K562 (cell line): ENCODE measurements at regions of chr3 and their contacts with region 1.

Region 1: DNA sequence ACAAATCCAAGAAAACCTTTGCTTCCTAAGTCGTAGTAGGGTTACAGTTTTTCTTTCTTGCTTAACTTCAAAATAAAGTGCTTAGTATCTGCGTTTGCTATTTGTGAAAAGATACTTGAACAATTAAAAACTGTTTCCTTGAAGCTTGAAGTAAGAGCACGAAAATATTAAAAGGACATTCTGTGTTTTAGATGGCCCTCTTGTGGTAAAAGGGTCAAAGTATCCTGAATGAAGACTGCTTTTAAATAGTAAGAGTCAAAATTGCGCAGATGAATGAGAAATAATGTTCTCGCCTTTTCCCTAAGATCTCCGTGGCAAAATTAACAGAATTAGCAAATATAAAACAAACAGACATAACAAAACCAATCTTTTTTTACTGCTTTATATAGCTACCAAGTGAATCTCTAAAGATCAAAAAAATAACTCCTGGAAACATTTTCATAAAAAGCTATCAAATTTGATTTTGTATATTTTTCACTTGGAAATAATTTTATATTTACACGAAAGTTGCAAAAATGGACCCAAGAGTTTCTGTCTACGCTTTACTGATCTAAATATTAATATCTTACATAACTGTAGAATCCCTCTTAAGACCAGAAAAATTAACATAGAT is 175.4 kb downstream of the MBNL1 start:
- DNase-seq: peak in 2 of 4 experiments; percentile 10 to 48
- ATAC-seq: peak; percentile 77
- H3K4me3 ChIP-seq: no peak overlapping the region
- H3K27ac ChIP-seq: no peak overlapping the region; the same call in 1 of the 3 replicates
- H3K4me1 ChIP-seq: no peaks in the 10 kb centered on the region
- H3K27me3 ChIP-seq: no peaks in the 10 kb centered on the region
- CTCF ChIP-seq: peak; percentile 24 to 65 (median 46); a peak in 5 of 6 replicates
- EP300 ChIP-seq: no peak
- POLR2A ChIP-seq: no peak
- RAD21 ChIP-seq: peak; percentile 76 to 82

Region 2: DNA sequence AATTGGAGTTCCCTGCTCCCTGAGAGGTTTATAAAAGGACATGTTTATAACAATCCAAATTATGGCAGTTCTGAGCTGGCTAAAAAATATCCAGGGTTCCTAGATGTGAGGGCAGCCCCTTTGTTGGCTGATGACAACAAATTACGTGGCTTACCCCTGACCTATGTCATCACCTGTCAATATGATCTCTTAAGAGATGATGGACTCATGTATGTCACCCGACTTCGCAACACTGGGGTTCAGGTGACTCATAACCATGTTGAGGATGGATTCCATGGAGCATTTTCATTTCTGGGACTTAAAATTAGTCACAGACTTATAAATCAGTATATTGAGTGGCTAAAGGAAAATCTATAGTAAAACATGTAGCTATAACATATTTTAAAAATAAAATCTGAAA is 616.3 kb before region 1 on chr3:
- CTCF ChIA-PET with region 1: no interaction called
- POLR2A ChIA-PET with region 1: no interaction called
- in situ Hi-C with region 1: no loop called
- intact Hi-C with region 1: no loop called
- DNase-seq: no peak
- ATAC-seq: no peak
- H3K4me3 ChIP-seq: no peak overlapping the region
- H3K27ac ChIP-seq: no peak overlapping the region
- H3K4me1 ChIP-seq: no peaks in the 10 kb centered on the region
- H3K27me3 ChIP-seq: no peaks in the 10 kb centered on the region
- CTCF ChIP-seq: no peak
- EP300 ChIP-seq: no peak
- POLR2A ChIP-seq: no peak
- RAD21 ChIP-seq: no peak

Region 3: GRCh38 chr3:152071924-152072323 is 372.2 kb before region 1 on chr3:
- CTCF ChIA-PET with region 1: interaction called, 3 read pairs
- POLR2A ChIA-PET with region 1: no interaction called
- in situ Hi-C with region 1: no loop called
- intact Hi-C with region 1: loop called (anchors 1 kb)
- DNase-seq: peak in 2 of 4 experiments; percentile 46 to 50
- ATAC-seq: peak; percentile 97
- H3K4me3 ChIP-seq: no peak overlapping the region
- H3K27ac ChIP-seq: no peak overlapping the region
- H3K4me1 ChIP-seq: no peaks in the 10 kb centered on the region
- H3K27me3 ChIP-seq: no peaks in the 10 kb centered on the region
- CTCF ChIP-seq: peak; percentile 51 to 61 (median 57)
- EP300 ChIP-seq: no peak
- POLR2A ChIP-seq: no peak
- RAD21 ChIP-seq: peak; percentile 26 to 78; a peak in 3 of 4 replicates

Region 4: DNA sequence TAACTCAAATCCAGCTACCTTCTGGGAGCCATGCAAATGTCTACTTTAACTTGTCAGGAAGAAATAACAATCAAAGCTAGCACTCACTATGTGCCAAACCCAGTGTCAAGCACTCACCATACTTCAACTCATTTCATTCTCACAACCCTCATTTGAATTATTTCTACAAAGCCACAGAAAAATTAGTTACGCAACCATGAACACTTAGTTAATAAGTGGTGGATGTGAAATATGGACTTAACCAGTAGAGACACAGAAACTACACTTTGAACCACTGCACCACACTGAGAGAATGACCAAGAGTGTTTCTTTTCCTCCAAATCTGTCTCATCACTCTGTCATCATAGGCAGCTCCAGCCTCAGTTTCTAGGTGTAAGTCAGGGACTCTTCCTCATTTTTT is 266.4 kb before region 1 on chr3:
- CTCF ChIA-PET with region 1: interaction called, 13 read pairs
- POLR2A ChIA-PET with region 1: interaction called, 3 read pairs
- in situ Hi-C with region 1: loop called (anchors 10 kb)
- intact Hi-C with region 1: no loop called
- DNase-seq: no peak
- ATAC-seq: no peak; the same call in 1 of the 3 replicates
- H3K4me3 ChIP-seq: no peak overlapping the region
- H3K27ac ChIP-seq: no peak overlapping the region
- H3K4me1 ChIP-seq: peaks cover 0 to 5% of the 10 kb centered on the region in 2 experiments; a peak in 3 of 5 replicates
- H3K27me3 ChIP-seq: no peaks in the 10 kb centered on the region
- CTCF ChIP-seq: no peak
- EP300 ChIP-seq: no peak
- POLR2A ChIP-seq: no peak
- RAD21 ChIP-seq: no peak

Region 5: GRCh38 chr3:152183473-152183872 is 260.7 kb before region 1 on chr3:
- CTCF ChIA-PET with region 1: interaction called, 13 read pairs
- POLR2A ChIA-PET with region 1: interaction called, 3 read pairs
- in situ Hi-C with region 1: loop called (anchors 10 kb)
- intact Hi-C with region 1: loop called (anchors 1 kb)
- DNase-seq: peak; percentile 51 to 88 (median 63)
- ATAC-seq: peak; percentile 97
- H3K4me3 ChIP-seq: no peak overlapping the region
- H3K27ac ChIP-seq: no peak overlapping the region
- H3K4me1 ChIP-seq: peaks cover 0 to 10% of the 10 kb centered on the region in 2 experiments; a peak in 2 of 5 replicates
- H3K27me3 ChIP-seq: no peaks in the 10 kb centered on the region
- CTCF ChIP-seq: peak; percentile 73 to 84 (median 78)
- EP300 ChIP-seq: no peak
- POLR2A ChIP-seq: no peak
- RAD21 ChIP-seq: peak; percentile 83 to 94

Region 6: GRCh38 chr3:152309535-152310307 is 134.4 kb before region 1 on chr3:
- CTCF ChIA-PET with region 1: no interaction called
- POLR2A ChIA-PET with region 1: no interaction called
- in situ Hi-C with region 1: no loop called
- intact Hi-C with region 1: loop called (anchors 10 kb)
- DNase-seq: no peak
- ATAC-seq: no peak
- H3K4me3 ChIP-seq: no peak overlapping the region
- H3K27ac ChIP-seq: no peak overlapping the region
- H3K4me1 ChIP-seq: peaks cover 0 to 5% of the 10 kb centered on the region in 2 experiments; a peak in 2 of 5 replicates
- H3K27me3 ChIP-seq: no peaks in the 10 kb centered on the region
- CTCF ChIP-seq: no peak
- EP300 ChIP-seq: no peak
- POLR2A ChIP-seq: no peak; the same call in 1 of the 2 replicates
- RAD21 ChIP-seq: no peak

Region 7: DNA sequence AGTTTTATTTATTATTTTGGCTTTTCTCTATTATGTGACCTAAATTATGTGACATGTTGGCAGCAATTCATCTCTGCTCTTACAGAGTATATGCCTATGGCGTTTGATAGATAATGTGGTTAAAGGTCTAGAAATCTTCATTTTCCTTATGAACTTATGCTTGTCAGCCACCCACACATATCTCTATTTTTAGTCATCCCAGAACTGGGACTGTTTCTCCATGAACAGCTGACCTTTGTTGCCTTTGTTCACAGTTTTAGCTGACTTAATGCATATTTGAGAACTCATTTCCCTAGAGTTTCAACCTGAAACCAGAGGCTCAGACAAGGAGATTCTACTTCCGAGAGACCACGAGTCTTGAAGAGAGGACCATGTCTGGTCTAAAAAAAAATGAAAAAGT is 894.4 kb after region 1 on chr3:
- CTCF ChIA-PET with region 1: no interaction called
- POLR2A ChIA-PET with region 1: no interaction called
- in situ Hi-C with region 1: no loop called
- intact Hi-C with region 1: no loop called
- DNase-seq: peak in 2 of 4 experiments; percentile 11 to 43
- ATAC-seq: no peak
- H3K4me3 ChIP-seq: no peak overlapping the region
- H3K27ac ChIP-seq: peak overlapping the region; percentile 30; the same call in 1 of the 3 replicates
- H3K4me1 ChIP-seq: no peaks in the 10 kb centered on the region; a peak in 2 of 5 replicates
- H3K27me3 ChIP-seq: no peaks in the 10 kb centered on the region
- CTCF ChIP-seq: no peak
- EP300 ChIP-seq: no peak
- POLR2A ChIP-seq: no peak
- RAD21 ChIP-seq: no peak